ENCODE measurements at regions of chr11 and their contacts with region 1.

Region 1: DNA sequence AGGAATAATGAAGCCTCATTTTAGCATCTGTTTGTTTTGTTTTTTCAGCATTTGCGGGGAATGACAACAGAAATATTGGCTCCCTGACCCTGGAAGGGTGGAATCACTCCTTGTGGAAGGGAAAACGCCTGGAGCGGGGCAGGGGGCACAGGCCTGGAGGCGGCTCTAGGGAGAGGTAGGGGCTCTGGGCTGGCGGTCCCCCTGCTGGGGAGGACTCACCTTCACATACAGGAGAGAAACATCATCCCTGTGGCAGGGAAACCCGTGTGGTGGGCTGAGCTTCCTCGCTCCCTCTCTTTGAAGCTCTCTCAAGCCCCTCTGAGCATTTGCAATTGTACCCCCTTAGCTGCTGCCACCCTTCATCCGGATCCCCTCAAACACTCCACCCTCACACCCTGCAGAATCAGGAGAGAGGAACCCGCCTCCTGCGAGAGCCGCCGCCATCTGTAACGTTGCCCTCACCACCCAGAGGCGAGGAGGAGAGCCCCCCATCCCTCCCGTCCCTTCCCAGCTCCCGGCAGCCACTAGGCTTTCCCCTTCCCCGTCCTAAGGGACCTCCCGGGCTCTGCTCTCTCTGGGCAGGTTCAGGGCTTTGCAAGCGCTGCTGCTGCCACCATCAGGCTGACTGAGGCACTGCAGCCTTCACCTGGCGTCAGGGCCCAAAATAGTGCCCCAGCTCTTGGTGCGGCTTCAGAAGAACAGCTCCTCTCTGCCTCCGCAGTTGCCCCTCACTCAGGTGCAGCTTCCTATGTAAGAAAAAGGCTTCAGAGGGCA is 10.4 kb downstream of the KIRREL3 start:
- DNase-seq: peak; percentile 72
- ATAC-seq: peak; percentile 76

Region 2: DNA sequence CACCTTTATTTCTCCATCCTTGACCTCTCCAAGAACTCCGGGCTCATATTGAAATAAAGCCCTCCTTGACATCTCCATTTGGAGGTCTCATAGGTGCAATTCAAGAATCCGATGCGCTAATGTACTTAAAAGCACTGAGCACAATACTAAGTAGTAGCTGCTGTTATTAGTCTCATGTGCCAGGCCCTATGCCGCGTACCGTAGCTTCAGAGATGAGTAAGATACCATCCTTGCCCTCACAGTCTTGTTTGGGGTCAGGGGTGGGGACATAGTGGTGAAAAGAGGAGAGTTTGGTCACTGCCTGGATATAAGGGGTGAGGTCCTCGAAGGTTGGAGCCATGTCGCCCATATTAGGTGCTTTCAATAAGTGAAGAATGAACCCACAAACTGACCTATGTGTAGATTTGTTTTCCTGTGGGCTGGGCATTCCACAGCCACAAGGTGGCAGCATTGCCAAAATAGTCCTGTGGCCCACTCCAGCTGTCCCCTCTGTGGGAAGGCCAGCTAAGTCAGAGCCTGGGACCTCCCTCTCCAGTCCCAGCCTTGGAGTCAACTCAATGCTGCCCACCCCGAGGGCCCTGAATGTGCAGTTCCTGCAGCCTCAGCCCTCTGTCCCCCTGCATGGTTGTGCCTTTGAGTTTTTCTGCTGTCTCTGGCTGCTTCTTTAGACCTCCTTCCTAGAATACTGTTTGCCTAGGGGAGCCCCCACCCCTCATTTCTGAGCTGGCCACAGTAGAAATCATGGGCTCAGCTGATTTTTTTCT is 679.7 kb before region 1 on chr11:
- intact Hi-C with region 1: loop called (anchors 5 kb)
- DNase-seq: peak; percentile 82
- ATAC-seq: peak; percentile 95

Region 3: DNA sequence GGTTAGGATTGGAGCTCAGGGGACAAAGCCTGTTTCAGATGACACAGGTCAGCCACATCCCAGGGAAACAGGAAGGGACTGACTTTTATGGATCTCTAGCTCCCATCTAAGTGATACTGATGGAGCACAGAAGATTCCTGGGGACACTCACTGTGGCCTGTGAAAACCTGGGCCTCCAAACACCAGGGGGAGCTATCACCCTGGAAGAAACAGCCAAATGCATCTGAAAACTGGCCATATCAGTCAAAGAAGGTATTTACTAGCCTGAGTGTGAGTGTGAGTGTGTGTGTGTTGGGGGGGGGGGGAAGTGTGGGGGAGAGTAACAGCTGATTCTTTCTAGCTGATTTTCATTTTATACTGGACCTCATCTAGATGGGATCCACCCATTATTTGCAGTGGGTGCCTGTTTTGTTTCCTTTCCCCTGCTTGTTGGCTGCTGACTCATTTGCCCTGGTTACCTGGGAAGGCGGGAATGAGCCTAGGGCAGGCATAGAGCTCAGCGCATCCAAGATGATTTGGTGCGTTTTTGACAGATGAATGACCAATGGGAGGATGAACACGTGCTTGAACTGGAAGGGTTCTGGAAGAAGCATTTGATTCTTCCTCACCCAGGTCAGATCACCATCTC is 273.6 kb before region 1 on chr11:
- intact Hi-C with region 1: loop called (anchors 5 kb)
- DNase-seq: no peak
- ATAC-seq: no peak

Measured in Right ventricle myocardium inferior (tissue), 1 donor.